ENCODE measurements at regions of chr10 and their contacts with region 1.

Region 1: DNA sequence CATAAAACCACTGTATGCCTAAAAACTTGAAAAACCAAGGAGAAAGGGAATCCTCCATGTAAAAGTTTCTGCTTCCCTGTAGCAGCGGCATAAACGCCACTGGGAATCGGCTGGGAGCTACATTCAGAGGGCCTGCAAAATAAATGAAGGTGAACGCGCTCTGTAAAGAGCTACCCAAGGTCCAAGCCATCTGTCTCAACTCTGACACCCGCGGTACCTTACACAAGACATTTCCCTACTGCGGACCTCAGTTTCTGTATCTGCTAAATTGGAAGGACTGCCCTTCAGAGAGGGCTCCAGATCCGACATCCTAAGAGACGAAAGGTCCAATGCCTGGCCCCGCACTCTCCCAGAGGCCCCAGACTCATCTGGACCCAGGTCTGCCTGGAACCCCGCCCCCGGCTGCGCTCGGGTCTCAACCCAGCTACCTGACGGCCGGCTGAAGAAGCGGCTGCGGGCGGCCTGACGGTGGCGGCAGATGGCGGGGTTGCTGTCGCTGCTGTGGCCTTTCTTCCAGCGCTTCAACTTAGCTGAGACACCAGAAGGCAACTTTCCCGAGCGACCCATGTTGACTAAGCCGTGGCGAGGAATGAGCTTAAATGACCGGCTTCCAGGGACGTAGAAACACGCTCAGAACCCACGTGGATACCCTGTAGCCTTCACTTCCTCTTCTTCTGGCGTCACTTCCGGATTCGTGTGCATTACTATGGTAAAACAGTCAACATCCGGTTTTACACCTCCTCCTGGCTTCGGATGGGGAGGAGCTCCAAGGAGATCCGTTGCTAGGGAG is at the start of gene RRP12:
- DNase-seq: peak; percentile 98
- H3K4me3 Mint-ChIP-seq: peak within 1 kb of the TSS; percentile 90
- H3K27ac Mint-ChIP-seq: peak within 1 kb of the TSS; percentile 98
- H3K4me1 Mint-ChIP-seq: no peaks in the 10 kb centered on the region
- H3K27me3 Mint-ChIP-seq: no peaks in the 10 kb centered on the region
- CTCF ChIP-seq: no peak
- total RNA-seq, gene RRP12: 66.1 and 86.7 TPM in 2 replicates

Region 2: DNA sequence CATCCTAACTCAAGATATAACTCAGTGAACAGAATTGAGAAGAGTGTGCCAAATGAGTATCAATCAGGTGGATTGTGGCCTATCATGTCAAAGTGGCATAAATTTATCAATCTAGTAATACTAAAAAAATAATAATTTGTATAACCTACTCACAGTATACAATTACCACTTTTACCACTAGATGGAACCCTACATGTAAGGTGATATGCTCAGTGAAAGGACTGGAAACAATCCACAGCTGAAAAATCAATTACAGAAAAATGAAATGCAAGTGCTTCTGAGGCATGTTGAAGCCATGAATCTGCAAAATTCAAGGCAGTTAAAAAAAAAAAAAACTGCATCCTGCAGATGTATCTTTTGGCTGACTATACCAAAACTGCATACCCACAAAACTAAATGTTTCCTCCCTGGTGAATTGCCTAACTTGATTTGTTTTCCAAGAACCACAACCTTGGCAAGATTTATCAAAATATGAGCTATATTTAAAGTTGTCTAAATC is 122.3 kb before region 1 on chr10:
- CTCF ChIA-PET with region 1: interaction called, 5 read pairs
- POLR2A ChIA-PET with region 1: interaction called, 11 read pairs
- intact Hi-C with region 1: no loop called
- DNase-seq: peak; percentile 84
- H3K4me3 Mint-ChIP-seq: no peak overlapping the region
- H3K27ac Mint-ChIP-seq: peak overlapping the region; percentile 89
- H3K4me1 Mint-ChIP-seq: peaks cover 17% of the 10 kb centered on the region
- H3K27me3 Mint-ChIP-seq: no peaks in the 10 kb centered on the region
- CTCF ChIP-seq: peak; percentile 37

Region 3: DNA sequence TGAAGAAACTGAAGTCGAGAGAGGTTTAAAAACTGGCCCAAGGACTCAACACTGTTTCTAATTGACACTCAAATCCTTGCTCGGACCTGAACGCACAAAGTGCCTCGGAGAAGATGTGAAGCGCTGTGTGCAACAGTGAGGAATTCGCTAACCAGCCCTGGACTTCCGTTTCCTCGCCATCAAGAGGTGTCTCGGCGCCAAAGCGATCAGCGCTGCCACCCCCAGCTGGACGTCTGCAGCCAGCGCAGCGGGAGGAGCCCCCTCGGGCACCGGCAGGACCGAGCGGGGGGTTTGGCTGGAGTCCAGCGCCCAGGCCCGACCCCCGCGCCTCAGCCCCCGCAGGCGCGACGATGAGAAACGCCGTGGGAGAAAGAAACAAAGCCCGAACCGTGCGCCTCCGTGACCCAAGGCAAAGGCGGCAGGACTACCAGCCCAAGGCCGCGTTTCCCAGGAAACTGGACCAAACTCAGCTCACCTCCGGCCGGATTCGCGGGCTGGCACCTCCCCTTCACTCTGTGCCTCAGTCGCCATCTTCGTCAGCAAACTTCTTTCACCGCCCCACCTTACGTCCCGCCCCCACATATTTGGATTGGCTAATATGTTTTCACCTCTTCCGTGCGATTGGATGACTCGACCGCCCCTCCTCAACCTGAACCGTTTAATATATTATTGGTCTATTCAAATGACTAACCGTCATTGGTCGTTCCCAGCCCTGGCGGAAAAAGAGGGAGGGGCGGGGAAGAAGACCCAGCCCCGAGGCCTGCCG is 108.6 kb before region 1 on chr10 and contains the start of gene ARHGAP19:
- CTCF ChIA-PET with region 1: no interaction called
- POLR2A ChIA-PET with region 1: interaction called, 12 read pairs
- intact Hi-C with region 1: no loop called
- DNase-seq: peak; percentile 99
- H3K4me3 Mint-ChIP-seq: peak within 1 kb of the TSS; percentile 87
- H3K27ac Mint-ChIP-seq: peak within 1 kb of the TSS; percentile 88
- H3K4me1 Mint-ChIP-seq: peaks cover 4% of the 10 kb centered on the region
- H3K27me3 Mint-ChIP-seq: no peaks in the 10 kb centered on the region
- CTCF ChIP-seq: no peak
- total RNA-seq, gene ARHGAP19: 10.6 and 11.7 TPM in 2 replicates

Region 4: DNA sequence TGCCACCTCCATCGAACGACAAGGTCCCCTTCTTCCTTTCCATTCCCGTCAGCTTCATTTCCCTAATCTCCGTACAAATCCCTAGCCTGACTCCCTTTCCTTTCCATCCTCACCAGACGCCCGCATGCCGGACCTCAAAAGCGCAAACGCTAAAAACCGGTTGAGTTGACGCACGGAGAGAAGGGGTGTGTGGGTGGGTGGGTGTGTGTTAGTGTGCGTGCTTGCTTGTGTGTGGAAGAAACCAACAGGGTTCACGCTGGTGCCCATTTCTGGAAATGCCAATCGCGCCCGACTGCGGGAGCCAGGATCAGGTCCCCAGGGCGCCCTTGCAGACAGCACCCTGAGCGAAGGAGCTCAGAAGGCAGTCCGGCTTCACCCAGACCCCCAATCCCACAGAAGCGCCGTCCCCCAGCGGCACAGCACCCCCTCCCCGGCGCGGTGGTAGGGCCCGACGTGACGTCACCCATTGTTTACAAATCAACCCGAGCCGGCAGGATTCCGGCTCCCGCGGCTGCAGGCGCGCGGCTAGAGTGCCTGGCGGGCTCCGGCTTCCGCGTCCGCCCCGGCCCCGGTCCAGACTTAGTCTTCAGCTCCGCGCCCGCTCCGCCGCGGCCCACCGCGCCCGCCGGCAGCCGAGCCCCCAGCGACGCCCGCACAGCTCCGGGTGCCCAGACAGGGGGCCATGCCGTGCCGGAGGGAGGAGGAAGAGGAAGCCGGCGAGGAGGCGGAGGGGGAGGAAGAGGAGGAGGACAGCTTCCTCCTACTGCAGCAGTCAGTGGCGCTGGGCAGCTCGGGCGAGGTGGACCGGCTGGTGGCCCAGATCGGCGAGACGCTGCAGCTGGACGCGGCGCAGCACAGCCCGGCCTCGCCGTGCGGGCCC is 81.8 kb before region 1 on chr10 and contains the start of gene FRAT1:
- CTCF ChIA-PET with region 1: interaction called, 4 read pairs
- POLR2A ChIA-PET with region 1: interaction called, 17 read pairs
- intact Hi-C with region 1: no loop called
- DNase-seq: peak; percentile 87
- H3K4me3 Mint-ChIP-seq: peak within 1 kb of the TSS; percentile 80
- H3K27ac Mint-ChIP-seq: peak within 1 kb of the TSS; percentile 99
- H3K4me1 Mint-ChIP-seq: peaks cover 8% of the 10 kb centered on the region
- H3K27me3 Mint-ChIP-seq: no peaks in the 10 kb centered on the region
- CTCF ChIP-seq: no peak
- total RNA-seq, gene FRAT1: 1.9 and 2.1 TPM in 2 replicates

Region 5: DNA sequence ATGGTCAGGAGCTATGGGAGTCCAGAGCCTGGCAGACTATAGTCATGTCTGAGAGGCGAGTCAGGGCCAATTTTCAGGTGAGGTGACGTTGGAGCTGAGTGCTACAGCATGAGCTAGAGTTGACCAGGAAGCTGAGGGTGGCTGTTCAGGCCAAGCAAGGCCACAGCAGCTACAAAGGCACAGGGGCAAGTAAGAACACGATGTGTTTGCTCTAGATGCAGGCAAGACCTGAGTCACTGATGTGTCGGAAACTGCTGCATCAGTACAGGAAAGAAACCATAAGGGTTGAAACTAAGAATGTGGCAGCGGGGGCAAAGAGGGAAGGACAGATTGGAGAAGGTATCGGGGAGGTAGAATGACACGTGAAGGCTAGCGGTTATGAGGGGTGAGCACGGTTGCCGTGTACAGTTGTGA is 12.0 kb after region 1 on chr10:
- CTCF ChIA-PET with region 1: interaction called, 16 read pairs
- POLR2A ChIA-PET with region 1: interaction called, 46 read pairs
- intact Hi-C with region 1: no loop called
- DNase-seq: peak; percentile 84
- H3K4me3 Mint-ChIP-seq: peak overlapping the region; percentile 13
- H3K27ac Mint-ChIP-seq: peak overlapping the region; percentile 92
- H3K4me1 Mint-ChIP-seq: peaks cover 8% of the 10 kb centered on the region
- H3K27me3 Mint-ChIP-seq: no peaks in the 10 kb centered on the region
- CTCF ChIP-seq: no peak

Region 6: DNA sequence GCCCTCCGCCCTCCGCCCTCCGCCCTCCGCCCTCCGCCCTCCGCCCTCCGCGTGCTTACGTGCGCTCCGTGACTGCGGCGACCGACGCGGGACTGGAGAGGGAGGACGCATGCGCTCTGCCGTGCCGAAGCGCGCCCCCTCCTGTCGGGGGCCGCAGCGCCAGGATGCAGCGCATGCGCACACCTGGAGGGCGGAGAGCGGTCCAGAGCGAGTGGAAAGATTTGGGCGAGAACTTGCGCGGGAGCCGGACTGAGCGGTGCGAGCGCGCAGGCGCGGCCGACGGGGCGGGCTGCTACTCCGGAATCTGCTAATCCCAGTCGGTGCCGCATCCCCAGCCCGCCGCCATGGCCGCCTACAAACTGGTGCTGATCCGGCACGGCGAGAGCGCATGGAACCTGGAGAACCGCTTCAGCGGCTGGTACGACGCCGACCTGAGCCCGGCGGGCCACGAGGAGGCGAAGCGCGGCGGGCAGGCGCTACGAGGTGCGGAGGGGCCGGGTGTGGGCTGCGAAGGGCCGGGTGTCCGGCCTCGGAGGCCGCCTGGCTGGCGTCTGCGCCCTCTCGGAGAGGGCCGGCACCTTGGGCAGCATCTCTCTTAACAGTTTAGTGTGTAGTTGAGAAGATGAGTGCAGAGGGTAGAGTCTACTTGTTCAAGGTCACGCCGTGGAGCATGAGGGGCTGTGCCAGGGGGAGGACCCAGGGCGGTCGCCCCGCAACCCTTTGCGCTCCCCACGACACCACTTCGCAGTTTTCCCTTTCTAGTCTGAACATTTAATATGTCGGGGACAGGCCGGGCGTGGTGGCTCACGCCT is 25.3 kb after region 1 on chr10 and contains the start of gene PGAM1:
- CTCF ChIA-PET with region 1: interaction called, 8 read pairs
- POLR2A ChIA-PET with region 1: interaction called, 26 read pairs
- intact Hi-C with region 1: no loop called
- DNase-seq: peak; percentile 95
- H3K4me3 Mint-ChIP-seq: peak within 1 kb of the TSS; percentile 77
- H3K27ac Mint-ChIP-seq: peak within 1 kb of the TSS; percentile 80
- H3K4me1 Mint-ChIP-seq: peaks cover 12% of the 10 kb centered on the region
- H3K27me3 Mint-ChIP-seq: no peaks in the 10 kb centered on the region
- CTCF ChIP-seq: peak; percentile 53
- total RNA-seq, gene PGAM1: 235 and 248 TPM in 2 replicates

Region 7: GRCh38 chr10:97445722-97446639 is 45.1 kb after region 1 on chr10 and contains the starts of genes EXOSC1 and ZDHHC16:
- CTCF ChIA-PET with region 1: no interaction called
- POLR2A ChIA-PET with region 1: interaction called, 12 read pairs
- intact Hi-C with region 1: no loop called
- DNase-seq: peak; percentile 97
- H3K4me3 Mint-ChIP-seq: peak within 1 kb of the TSS; percentile 99
- H3K27ac Mint-ChIP-seq: peak within 1 kb of the TSS; percentile 74
- H3K4me1 Mint-ChIP-seq: peaks cover 25% of the 10 kb centered on the region
- H3K27me3 Mint-ChIP-seq: no peaks in the 10 kb centered on the region
- CTCF ChIP-seq: no peak
- total RNA-seq, gene EXOSC1: 56.5 and 62.3 TPM in 2 replicates
- total RNA-seq, gene ZDHHC16: 44.9 and 48.0 TPM in 2 replicates

Region 8: DNA sequence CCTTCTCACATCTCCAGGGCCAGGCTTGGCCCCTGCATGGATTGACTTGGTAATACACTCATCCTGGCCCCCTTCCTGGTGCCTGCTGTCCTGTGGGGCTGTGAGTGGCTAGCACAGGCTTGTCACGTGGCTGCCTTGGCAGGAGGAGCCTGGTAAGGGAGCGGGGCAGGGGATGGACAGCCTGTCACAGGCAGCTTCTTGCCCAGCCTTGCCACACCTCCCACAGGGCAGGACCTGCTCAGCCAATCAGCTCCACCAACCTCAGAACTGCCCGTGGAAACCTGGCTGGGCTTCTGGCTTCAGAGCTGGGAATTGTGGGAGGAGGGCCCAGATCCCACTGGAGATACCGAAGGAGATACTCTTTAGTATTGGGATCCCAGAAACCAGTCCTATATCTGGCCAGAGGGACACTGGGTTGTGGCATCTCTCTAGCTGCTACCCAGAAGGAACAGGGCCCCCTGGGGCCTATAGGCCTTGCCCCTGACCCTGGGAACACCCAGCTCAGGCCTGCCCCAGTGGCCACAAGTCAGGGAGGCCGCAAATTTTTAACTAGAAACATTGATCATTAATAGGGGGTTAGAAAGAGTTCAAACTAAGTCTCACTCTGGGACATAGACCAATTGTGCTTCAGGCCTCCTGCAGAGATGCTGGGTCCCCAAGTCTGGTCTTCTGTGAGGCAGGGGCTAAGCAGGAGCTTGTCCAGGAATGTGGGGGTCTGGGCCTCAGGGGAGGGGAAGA is 183.4 kb after region 1 on chr10 and contains the start of gene HOGA1:
- CTCF ChIA-PET with region 1: no interaction called
- POLR2A ChIA-PET with region 1: no interaction called
- intact Hi-C with region 1: no loop called
- DNase-seq: peak; percentile 85
- H3K4me3 Mint-ChIP-seq: peak within 1 kb of the TSS; percentile 35
- H3K27ac Mint-ChIP-seq: peak within 1 kb of the TSS; percentile 78
- H3K4me1 Mint-ChIP-seq: peaks cover 22% of the 10 kb centered on the region
- H3K27me3 Mint-ChIP-seq: no peaks in the 10 kb centered on the region
- CTCF ChIP-seq: no peak
- total RNA-seq, gene HOGA1: 0.88 and 1.7 TPM in 2 replicates

Measured in MCF 10A (cell line).